ENCODE measurements at regions of chr10 and their contacts with region 1.

Region 1: DNA sequence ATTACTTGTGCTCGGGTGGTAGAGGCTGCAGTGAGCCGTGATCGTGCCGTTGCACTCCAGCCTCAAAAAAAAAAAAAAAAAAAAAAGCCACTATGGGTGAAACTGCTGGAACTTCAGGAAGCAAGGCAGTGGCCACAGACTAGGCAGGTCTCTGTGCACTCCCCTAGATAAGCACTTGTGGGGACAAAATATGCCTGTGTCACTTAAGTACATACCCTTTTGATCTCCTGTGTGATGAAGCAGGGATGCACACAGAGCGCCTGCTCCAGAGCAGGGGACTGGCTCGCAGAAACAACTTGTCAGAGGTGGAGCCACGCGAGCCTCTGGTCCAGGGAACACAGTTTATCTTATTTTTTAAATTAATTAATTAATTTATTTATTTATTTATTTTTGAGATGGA is 42.9 kb upstream of the PSAP start:
- DNase-seq: no peak
- CTCF ChIP-seq: no peak

Region 2: GRCh38 chr10:71771821-71772617 is 121.9 kb before region 1 on chr10:
- CTCF ChIA-PET with region 1: interaction called, 11 read pairs
- POLR2A ChIA-PET with region 1: no interaction called
- DNase-seq: no peak
- CTCF ChIP-seq: no peak

Region 3: GRCh38 chr10:71822448-71822763 is 71.5 kb before region 1 on chr10:
- CTCF ChIA-PET with region 1: interaction called, 11 read pairs
- POLR2A ChIA-PET with region 1: no interaction called
- DNase-seq: no peak
- CTCF ChIP-seq: no peak

Region 4: GRCh38 chr10:71860243-71861029 is 33.5 kb before region 1 on chr10:
- CTCF ChIA-PET with region 1: interaction called, 19 read pairs
- POLR2A ChIA-PET with region 1: no interaction called
- DNase-seq: peak; percentile 58
- CTCF ChIP-seq: no peak

Region 5: GRCh38 chr10:71880425-71881306 is 13.3 kb before region 1 on chr10:
- CTCF ChIA-PET with region 1: interaction called, 30 read pairs
- POLR2A ChIA-PET with region 1: no interaction called
- DNase-seq: no peak
- CTCF ChIP-seq: no peak

Region 6: GRCh38 chr10:71916827-71917226 is 22.9 kb after region 1 on chr10:
- CTCF ChIA-PET with region 1: interaction called, 11 read pairs
- POLR2A ChIA-PET with region 1: no interaction called
- DNase-seq: no peak
- CTCF ChIP-seq: no peak

Region 7: DNA sequence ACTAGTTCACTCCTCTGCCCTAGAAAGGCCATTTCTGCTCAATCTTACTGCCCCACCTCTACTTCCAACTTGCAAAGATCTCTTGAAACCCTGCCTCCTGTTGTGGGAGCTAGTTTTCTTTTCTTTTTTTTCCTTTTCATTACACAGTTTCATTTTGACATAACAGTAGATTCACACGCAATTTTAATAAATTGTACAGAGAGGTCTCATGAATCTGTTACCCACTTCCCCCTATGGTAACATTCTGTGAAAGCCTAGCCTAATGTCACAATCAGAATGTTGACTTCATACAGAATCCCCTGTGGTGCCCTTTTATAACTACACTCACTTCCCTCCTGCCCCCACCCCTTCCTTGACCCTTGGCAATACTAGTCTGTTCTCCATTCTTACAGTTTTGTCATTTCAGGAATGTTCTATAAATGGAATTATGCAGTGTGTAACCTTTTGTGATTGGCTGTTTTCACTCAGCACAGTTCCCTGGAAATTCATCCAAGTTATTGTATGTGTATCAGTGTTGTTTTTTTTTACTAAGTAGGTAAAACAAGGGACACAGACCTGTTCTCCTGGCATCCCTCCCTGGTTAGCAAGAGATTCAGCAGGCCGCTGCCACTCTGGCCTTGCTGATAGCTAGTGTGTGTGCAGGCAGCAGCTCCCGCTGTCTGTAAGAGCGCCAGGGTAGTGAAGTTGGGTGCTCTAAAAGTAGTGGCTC is 91.8 kb after region 1 on chr10:
- CTCF ChIA-PET with region 1: interaction called, 16 read pairs
- POLR2A ChIA-PET with region 1: no interaction called
- DNase-seq: peak; percentile 59
- CTCF ChIP-seq: no peak

Region 8: DNA sequence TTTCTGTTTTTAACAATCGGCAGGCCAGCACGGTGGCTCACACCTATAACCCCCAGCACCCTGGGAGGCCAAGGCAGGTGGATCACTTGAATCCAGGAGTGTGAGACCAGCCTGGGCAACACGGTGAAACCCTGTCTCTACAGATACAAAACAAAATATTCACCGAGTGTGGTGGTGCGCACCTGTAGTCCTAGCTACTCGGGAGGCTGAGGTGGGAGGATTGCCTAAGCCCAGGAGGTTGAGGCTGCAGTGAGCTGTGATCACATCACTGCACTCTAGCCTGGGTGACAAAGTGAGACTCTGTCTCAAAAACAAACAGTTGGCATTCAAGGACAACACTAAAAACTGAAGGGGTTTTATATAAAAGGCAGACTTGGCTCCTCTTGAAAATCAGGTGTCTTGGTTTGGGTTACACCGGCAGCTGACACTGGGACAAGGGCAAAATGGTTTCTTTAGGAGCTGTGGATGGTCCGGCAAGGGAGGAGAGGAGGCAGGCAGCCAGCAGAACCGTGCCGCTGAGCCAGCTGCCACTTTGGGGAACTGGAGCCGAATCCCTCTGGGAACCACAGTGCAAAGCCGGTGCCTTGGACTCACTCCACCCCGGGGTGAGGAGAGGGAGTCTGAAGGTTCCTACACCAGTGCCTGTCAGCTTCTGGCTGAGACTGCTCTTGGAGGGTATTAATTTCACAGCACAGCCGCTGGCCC is 122.8 kb after region 1 on chr10:
- CTCF ChIA-PET with region 1: no interaction called
- POLR2A ChIA-PET with region 1: no interaction called
- DNase-seq: no peak
- CTCF ChIP-seq: no peak